Activated CD4-positive, alpha-beta T cell treated with anti-CD3 and anti-CD28 coated beads for 36 hours (primary cell): ENCODE measurements at regions of chr6 and their contacts with region 1.

Region 1: DNA sequence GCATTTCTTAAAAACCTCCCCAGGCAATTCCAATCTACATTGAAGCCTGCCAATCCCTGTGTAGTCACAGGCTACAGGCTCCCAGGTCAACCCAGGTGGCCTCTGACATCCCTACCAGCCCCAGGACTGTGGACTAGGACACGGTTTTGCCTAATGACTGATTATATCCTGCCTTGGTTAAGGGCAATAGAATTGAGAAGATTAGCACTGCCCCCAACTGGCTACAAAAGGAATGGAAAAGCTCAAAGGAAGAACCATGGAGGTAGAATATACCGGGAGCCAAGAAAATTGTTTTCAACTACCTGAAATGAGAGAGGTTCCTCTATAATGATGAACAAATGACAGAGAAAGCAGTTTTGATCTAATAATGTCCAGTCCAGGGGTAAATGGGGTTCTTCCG is 421.1 kb upstream of the AGPAT4 start:
- DNase-seq: no peak
- ATAC-seq: no peak
- H3K4me3 Mint-ChIP-seq: no peak overlapping the region
- H3K27ac Mint-ChIP-seq: no peak overlapping the region
- H3K4me1 Mint-ChIP-seq: no peaks in the 10 kb centered on the region
- H3K27me3 Mint-ChIP-seq: no peaks in the 10 kb centered on the region

Region 2: DNA sequence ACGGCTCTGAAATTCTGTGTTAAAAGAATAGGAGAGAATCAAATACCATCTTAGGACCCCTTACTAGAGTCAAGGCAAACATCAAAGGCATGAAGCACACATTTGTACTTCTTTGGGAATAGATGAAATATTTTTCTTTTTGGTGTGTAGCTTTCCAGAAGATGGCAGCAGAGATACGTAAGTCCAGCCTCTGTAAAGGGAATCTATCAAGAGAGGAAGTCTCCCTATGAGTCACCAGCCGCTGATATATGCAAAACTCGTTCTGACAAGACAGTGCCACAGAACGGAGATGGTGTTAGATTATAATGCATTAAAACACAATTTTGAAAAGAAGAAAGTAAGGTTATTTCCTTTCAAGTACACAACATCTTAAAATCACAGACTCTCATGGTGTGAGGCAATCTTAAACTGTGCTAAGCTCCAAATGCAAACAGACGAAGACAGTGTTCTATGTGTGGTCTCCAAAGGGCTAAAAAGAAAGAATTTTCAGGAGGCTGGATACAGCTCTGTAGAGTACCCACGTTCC is 301.1 kb before region 1 on chr6:
- CTCF ChIA-PET with region 1: interaction called, 5 read pairs
- POLR2A ChIA-PET with region 1: no interaction called
- intact Hi-C with region 1: loop called (anchors 1 kb)
- DNase-seq: peak; percentile 75
- ATAC-seq: peak; percentile 99
- H3K4me3 Mint-ChIP-seq: no peak overlapping the region
- H3K27ac Mint-ChIP-seq: no peak overlapping the region
- H3K4me1 Mint-ChIP-seq: no peaks in the 10 kb centered on the region
- H3K27me3 Mint-ChIP-seq: peaks cover 5% of the 10 kb centered on the region

Region 3: DNA sequence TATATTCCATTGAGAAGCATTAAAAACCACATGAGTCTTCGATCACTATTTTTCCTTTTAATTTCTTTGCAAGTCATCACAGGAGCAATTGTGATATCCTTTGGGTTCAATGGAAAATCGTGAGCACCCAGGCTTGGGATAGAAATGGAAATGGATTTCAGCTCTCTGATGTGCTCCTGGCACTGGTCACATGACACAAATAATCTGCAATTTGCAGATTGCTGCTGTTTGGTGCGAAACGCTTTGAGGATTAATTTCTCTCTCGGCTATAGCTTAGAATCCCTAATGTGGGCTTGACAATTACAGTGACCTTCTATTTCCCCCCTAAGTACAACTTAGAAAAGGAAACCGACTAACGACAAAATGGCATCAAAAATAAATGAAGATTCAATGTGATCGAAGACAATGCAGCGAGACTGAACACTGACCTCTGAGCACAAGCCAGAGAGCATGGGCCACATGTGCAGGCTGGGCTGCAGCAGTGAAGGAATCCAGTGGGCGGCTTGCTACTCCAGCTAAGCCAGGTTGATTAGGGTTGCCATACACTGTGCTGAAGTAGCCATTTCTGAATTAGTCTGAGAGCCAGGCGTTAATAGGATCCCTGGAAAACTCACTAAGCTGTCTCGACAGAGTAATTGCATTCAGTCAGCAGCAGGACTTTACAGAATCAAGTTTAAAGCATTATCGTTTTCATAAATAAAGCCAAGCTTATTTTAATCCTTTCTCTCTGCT is 119.3 kb before region 1 on chr6:
- CTCF ChIA-PET with region 1: no interaction called
- POLR2A ChIA-PET with region 1: no interaction called
- intact Hi-C with region 1: no loop called
- DNase-seq: no peak
- ATAC-seq: no peak
- H3K4me3 Mint-ChIP-seq: no peak overlapping the region
- H3K27ac Mint-ChIP-seq: no peak overlapping the region
- H3K4me1 Mint-ChIP-seq: no peaks in the 10 kb centered on the region
- H3K27me3 Mint-ChIP-seq: no peaks in the 10 kb centered on the region